Activated naive CD4-positive, alpha-beta T cell treated with anti-CD3 and anti-CD28 coated beads for 36 hours (primary cell): ENCODE measurements at regions of chr2 and their contacts with region 1.

Region 1: GRCh38 chr2:43131024-43131889 is 95.1 kb downstream of the ZFP36L2 start:
- DNase-seq: peak; percentile 94
- H3K4me3 Mint-ChIP-seq: peak overlapping the region; percentile 20
- H3K27ac Mint-ChIP-seq: peak overlapping the region; percentile 18
- H3K4me1 Mint-ChIP-seq: peaks cover 87% of the 10 kb centered on the region
- H3K27me3 Mint-ChIP-seq: no peaks in the 10 kb centered on the region

Region 2: GRCh38 chr2:42944779-42945415 is 186.4 kb before region 1 on chr2:
- CTCF ChIA-PET with region 1: interaction called, 6 read pairs
- intact Hi-C with region 1: loop called (anchors 2 kb)
- DNase-seq: no peak
- H3K4me3 Mint-ChIP-seq: no peak overlapping the region
- H3K27ac Mint-ChIP-seq: no peak overlapping the region
- H3K4me1 Mint-ChIP-seq: peaks cover 2% of the 10 kb centered on the region
- H3K27me3 Mint-ChIP-seq: no peaks in the 10 kb centered on the region

Region 3: GRCh38 chr2:43075054-43075593 is 56.1 kb before region 1 on chr2:
- CTCF ChIA-PET with region 1: no interaction called
- intact Hi-C with region 1: no loop called
- DNase-seq: no peak
- H3K4me3 Mint-ChIP-seq: no peak overlapping the region
- H3K27ac Mint-ChIP-seq: no peak overlapping the region
- H3K4me1 Mint-ChIP-seq: peaks cover 4% of the 10 kb centered on the region
- H3K27me3 Mint-ChIP-seq: no peaks in the 10 kb centered on the region

Region 4: GRCh38 chr2:43149482-43150107 is 18.3 kb after region 1 on chr2:
- CTCF ChIA-PET with region 1: interaction called, 18 read pairs
- intact Hi-C with region 1: loop called (anchors 1 kb)
- DNase-seq: peak; percentile 90
- H3K4me3 Mint-ChIP-seq: peak overlapping the region; percentile 26
- H3K27ac Mint-ChIP-seq: peak overlapping the region; percentile 62
- H3K4me1 Mint-ChIP-seq: peaks cover 70% of the 10 kb centered on the region
- H3K27me3 Mint-ChIP-seq: no peaks in the 10 kb centered on the region

Region 5: DNA sequence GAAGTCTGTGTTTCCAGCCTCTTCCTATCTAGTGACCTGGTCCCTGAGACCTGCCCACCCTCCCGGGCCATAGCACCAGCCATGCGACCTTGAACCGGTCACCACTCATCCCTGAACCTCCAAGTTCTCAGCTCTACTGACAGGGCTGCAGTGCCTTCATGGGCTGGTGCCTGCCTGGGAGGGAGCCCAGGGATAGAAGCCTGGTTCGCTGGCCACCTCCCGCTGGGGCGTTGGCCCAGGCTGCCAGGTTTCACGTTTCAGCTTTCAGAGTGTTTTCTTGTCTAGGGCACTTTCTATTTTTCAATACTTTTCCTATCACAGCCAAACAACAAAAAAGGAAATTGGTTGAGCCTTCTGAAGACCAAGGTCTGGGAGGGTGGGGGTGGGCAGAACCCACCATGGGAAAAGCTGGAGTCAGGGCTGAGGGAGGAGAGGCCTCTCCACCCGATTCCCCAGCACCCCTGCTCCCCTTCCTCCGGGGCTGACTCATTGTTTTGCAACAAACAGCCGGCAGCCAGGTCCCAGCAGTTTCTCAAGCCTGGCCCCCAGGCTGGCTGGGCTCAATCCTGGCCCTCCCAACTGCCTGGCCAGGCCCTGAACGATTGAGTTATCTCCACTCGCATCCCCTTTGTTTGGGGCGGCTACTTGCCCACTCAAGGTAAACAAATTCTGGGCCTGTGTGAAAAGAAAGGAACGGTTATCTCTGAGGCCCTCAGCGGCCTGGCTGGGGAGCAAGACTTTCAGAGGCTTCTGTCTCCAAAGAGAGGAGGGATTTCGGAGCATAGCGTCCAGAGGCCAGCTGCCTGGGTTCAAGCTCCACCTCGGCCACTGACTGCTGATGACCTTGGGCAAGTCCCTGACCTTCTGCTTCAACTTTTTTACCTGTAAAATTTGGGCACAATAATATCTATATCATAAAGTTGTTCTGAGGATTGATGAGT is 47.6 kb after region 1 on chr2:
- CTCF ChIA-PET with region 1: interaction called, 23 read pairs
- intact Hi-C with region 1: loop called (anchors 1 kb)
- DNase-seq: peak; percentile 65
- H3K4me3 Mint-ChIP-seq: peak overlapping the region; percentile 33
- H3K27ac Mint-ChIP-seq: peak overlapping the region; percentile 86
- H3K4me1 Mint-ChIP-seq: peaks cover 77% of the 10 kb centered on the region
- H3K27me3 Mint-ChIP-seq: no peaks in the 10 kb centered on the region

Region 6: GRCh38 chr2:43484323-43484930 is 353.2 kb after region 1 on chr2:
- CTCF ChIA-PET with region 1: interaction called, 24 read pairs
- intact Hi-C with region 1: loop called (anchors 1 kb)
- DNase-seq: no peak
- H3K4me3 Mint-ChIP-seq: no peak overlapping the region
- H3K27ac Mint-ChIP-seq: no peak overlapping the region
- H3K4me1 Mint-ChIP-seq: no peaks in the 10 kb centered on the region
- H3K27me3 Mint-ChIP-seq: no peaks in the 10 kb centered on the region